ENCODE measurements at regions of chr4 and their contacts with region 1.

Region 1: GRCh38 chr4:122195718-122196117 is 43.6 kb downstream of the BLTP1 start:
- DNase-seq: no peak
- ATAC-seq: no peak
- H3K4me3 ChIP-seq: no peak overlapping the region
- H3K4me3 Mint-ChIP-seq: no peak overlapping the region
- H3K27ac ChIP-seq: no peak overlapping the region
- H3K27ac Mint-ChIP-seq: no peak overlapping the region
- H3K4me1 ChIP-seq: no peaks in the 10 kb centered on the region
- H3K4me1 Mint-ChIP-seq: no peaks in the 10 kb centered on the region
- H3K27me3 ChIP-seq: no peaks in the 10 kb centered on the region
- H3K27me3 Mint-ChIP-seq: no peaks in the 10 kb centered on the region
- CTCF ChIP-seq: no peak

Region 2: DNA sequence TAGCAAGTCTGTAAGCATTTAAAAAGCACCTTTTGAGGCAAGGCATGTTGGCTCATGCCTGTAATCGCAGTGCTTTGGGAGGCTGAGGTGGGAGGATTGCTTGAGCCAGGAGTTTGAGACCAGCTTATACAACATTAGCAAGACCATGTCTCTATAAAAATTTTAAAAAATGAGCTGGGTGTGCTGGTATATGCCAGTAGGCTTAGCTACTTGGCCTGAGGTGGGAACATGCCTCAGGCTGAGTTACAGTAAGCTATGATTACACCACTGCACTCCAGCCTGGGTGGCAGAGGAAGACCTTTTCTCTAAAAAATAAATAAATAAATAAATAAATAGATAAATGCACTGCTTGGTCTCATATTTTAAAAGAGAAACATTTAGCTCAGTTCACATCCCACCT is 16.8 kb before region 1 on chr4:
- CTCF ChIA-PET with region 1: no interaction called
- POLR2A ChIA-PET with region 1: no interaction called
- intact Hi-C with region 1: loop called in 1 of 2 experiments (anchors 2 kb)
- DNase-seq: no peak
- ATAC-seq: no peak
- H3K4me3 ChIP-seq: no peak overlapping the region
- H3K4me3 Mint-ChIP-seq: no peak overlapping the region
- H3K27ac ChIP-seq: no peak overlapping the region
- H3K27ac Mint-ChIP-seq: no peak overlapping the region
- H3K4me1 ChIP-seq: no peaks in the 10 kb centered on the region
- H3K4me1 Mint-ChIP-seq: no peaks in the 10 kb centered on the region
- H3K27me3 ChIP-seq: no peaks in the 10 kb centered on the region
- H3K27me3 Mint-ChIP-seq: no peaks in the 10 kb centered on the region
- CTCF ChIP-seq: no peak

Region 3: DNA sequence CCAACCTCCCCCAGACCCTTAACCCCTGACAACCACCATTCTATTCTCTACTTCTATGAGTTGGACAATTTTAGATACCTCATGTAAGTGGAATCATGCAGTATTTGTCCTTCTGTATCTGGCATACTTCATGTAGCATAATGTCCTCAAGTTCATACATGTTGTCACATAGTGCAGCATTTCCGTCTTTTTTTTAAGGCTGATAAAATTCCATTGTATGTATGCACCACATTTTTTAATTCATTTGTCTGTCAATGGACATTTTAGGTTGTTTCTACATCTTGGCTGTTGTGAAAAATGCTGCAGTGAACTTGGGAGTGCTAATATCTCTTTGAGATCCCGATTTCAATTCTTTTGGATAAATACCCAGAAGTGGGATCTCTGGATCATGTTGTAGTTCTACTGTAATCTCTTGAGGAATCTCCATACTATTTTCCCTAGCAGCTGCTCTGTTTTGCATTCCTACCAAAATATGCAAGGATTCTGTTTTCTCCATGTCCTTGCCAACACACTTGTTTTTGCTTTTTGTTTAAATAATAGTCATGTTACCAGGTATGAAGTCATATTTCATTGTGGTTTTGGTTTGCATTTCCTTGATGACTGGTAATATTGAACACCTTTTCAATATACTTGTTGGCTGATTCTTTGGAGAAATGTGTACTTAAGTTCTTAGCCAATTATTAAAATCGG is 134.3 kb after region 1 on chr4:
- CTCF ChIA-PET with region 1: no interaction called
- POLR2A ChIA-PET with region 1: no interaction called
- intact Hi-C with region 1: loop called in 1 of 2 experiments (anchors 5 kb)
- DNase-seq: no peak
- ATAC-seq: no peak
- H3K4me3 ChIP-seq: no peak overlapping the region
- H3K4me3 Mint-ChIP-seq: no peak overlapping the region
- H3K27ac ChIP-seq: no peak overlapping the region
- H3K27ac Mint-ChIP-seq: no peak overlapping the region
- H3K4me1 ChIP-seq: no peaks in the 10 kb centered on the region
- H3K4me1 Mint-ChIP-seq: no peaks in the 10 kb centered on the region
- H3K27me3 ChIP-seq: no peaks in the 10 kb centered on the region
- H3K27me3 Mint-ChIP-seq: no peaks in the 10 kb centered on the region
- CTCF ChIP-seq: no peak

Measured in CD4-positive, alpha-beta T cell (primary cell).